ENCODE measurements at regions of chr6 and their contacts with region 1.

Region 1: DNA sequence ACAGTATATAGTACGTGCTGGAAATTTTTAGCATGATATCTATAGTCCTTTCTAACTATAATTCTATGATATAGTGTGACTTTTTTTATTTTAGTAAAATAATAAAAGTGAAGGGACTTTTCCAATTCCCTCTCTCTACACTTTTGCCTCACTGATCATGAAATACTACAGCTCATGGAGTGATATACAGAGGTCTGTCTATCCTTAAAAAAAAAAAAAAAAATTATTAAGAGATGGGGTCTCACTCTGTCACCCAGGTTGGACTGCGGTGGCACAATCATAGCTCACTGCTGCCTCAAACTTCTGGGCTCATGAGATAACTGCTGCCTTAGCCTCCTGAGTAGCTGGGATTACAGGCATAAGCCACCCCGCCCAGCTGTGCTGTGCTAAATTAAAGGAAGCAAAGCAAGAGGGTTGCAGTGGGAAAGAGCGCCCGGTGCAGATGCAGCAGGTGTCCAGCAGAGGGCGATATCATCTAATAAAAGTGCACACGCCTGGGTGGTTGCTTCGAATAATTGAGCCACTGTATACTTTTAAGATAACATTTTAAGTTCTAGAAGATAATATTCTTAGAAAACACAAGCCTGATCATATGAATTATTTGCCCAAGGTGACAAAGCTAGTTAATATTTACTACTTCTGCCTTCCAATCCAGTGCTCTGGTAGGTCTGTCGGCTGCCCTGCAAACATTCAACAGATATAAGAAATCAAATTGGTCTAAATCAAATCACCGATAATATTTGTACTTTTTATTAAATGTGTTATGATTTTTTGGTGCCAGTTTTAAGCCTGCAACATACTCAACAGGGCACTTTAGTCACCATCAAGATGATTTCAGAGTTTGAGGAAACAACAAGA is 94.9 kb upstream of the NT5E start:
- DNase-seq: peak; percentile 12
- H3K4me3 ChIP-seq: no peak overlapping the region
- CTCF ChIP-seq: peak; percentile 77

Region 2: GRCh38 chr6:85023721-85024120 is 331.3 kb before region 1 on chr6:
- CTCF ChIA-PET with region 1: no interaction called
- POLR2A ChIA-PET with region 1: no interaction called
- DNase-seq: no peak
- H3K4me3 ChIP-seq: no peak overlapping the region
- CTCF ChIP-seq: no peak

Region 3: GRCh38 chr6:85126485-85127167 is 228.4 kb before region 1 on chr6:
- CTCF ChIA-PET with region 1: no interaction called
- POLR2A ChIA-PET with region 1: no interaction called
- DNase-seq: no peak
- H3K4me3 ChIP-seq: peak overlapping the region; percentile 19
- CTCF ChIP-seq: peak; percentile 86

Region 4: GRCh38 chr6:85250586-85251220 is 104.3 kb before region 1 on chr6:
- CTCF ChIA-PET with region 1: no interaction called
- POLR2A ChIA-PET with region 1: no interaction called
- DNase-seq: no peak
- H3K4me3 ChIP-seq: no peak overlapping the region
- CTCF ChIP-seq: no peak

Region 5: GRCh38 chr6:85329196-85329595 is 25.8 kb before region 1 on chr6:
- CTCF ChIA-PET with region 1: no interaction called
- POLR2A ChIA-PET with region 1: no interaction called
- DNase-seq: no peak
- H3K4me3 ChIP-seq: no peak overlapping the region
- CTCF ChIP-seq: no peak

Region 6: DNA sequence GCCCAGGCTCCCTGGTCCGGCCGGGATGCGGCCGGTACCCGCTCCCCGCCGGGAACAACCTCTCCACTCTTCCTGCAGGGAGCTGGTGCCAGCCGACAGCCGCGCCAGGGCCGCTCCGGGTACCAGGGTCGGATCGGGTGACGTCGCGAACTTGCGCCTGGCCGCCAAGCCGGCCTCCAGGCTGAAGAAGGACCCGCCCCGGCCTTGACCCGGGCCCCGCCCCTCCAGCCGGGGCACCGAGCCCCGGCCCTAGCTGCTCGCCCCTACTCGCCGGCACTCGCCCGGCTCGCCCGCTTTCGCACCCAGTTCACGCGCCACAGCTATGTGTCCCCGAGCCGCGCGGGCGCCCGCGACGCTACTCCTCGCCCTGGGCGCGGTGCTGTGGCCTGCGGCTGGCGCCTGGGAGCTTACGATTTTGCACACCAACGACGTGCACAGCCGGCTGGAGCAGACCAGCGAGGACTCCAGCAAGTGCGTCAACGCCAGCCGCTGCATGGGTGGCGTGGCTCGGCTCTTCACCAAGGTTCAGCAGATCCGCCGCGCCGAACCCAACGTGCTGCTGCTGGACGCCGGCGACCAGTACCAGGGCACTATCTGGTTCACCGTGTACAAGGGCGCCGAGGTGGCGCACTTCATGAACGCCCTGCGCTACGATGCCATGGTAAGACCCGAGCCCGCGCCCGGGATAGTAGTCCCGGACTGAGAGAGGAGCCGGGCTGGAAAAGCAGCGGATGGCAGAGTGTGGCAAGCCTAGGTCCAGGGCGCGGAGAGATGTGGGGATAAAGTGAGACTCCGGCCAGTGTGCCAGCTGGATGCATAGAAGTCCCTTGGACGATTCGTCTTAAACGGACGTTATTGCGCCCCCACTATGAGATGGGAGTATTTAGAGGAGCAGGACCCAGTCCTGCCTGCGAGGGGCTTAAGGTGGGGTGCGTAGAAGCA is 95.1 kb after region 1 on chr6 and contains the start of gene NT5E:
- CTCF ChIA-PET with region 1: interaction called, 32 read pairs
- POLR2A ChIA-PET with region 1: interaction called, 7 read pairs
- DNase-seq: no peak
- H3K4me3 ChIP-seq: peak within 1 kb of the TSS; percentile 78
- CTCF ChIP-seq: peak; percentile 9

Region 7: GRCh38 chr6:85460921-85461797 is 106.2 kb after region 1 on chr6:
- CTCF ChIA-PET with region 1: interaction called, 21 read pairs
- POLR2A ChIA-PET with region 1: interaction called, 10 read pairs
- DNase-seq: no peak
- H3K4me3 ChIP-seq: no peak overlapping the region
- CTCF ChIP-seq: no peak

Region 8: GRCh38 chr6:85493389-85493788 is 138.4 kb after region 1 on chr6:
- CTCF ChIA-PET with region 1: interaction called, 366 read pairs
- POLR2A ChIA-PET with region 1: no interaction called
- DNase-seq: no peak
- H3K4me3 ChIP-seq: no peak overlapping the region
- CTCF ChIP-seq: no peak

Region 9: DNA sequence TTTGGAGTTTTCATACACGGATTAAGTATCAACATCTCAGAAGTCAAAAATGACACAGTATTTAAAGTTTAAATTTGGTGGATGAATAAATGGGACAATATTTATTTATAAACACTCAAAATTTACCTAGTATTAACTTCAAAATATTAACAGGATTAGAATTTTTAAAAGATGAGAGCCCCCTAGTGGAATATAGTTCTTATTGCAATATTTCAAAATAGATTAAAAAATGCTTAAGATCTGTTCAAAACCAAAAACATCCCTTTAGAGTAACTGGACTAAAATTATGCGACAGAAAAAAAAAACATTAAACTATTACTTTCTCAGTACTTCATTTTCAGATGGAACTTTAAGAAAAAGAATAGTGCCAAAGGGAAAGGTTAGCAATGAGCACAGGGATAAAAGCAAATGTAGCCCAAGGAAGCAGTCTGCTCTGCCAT is 182.1 kb after region 1 on chr6:
- CTCF ChIA-PET with region 1: interaction called, 50 read pairs
- POLR2A ChIA-PET with region 1: no interaction called
- DNase-seq: no peak
- H3K4me3 ChIP-seq: no peak overlapping the region
- CTCF ChIP-seq: peak; percentile 5

Measured in AG04449 (cell line).